Endothelial cell of umbilical vein (primary cell): ENCODE measurements at regions of chr2 and their contacts with region 1.

Region 1: GRCh38 chr2:36663851-36664695 is 32.4 kb upstream of the VIT start:
- DNase-seq: peak; percentile 82
- H3K4me3 ChIP-seq: no peak overlapping the region
- H3K27ac ChIP-seq: peak overlapping the region; percentile 15
- H3K4me1 ChIP-seq: peaks cover 14% of the 10 kb centered on the region
- H3K27me3 ChIP-seq: no peaks in the 10 kb centered on the region
- CTCF ChIP-seq: peak; percentile 53 to 67
- POLR2A ChIP-seq: no peak

Region 2: DNA sequence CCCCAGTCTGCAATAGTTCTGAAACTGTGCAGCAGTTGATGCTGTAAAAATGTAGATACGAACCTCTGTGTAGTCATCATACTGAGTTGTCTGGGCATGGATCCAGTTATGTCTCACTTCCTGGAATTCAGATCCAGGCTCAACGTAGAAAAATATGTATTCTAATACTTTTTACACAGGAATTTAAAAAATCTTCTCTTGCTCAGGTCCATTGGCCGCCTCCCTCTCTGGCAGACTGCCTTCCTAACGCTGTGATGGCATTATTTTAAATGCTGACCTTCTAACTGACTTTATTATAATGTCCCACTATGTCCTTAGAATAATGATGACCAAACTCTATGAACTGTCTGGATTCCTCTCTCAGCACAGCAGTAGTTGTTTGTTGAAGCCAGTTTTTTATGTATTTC is 185.7 kb before region 1 on chr2:
- CTCF ChIA-PET with region 1: no interaction called
- POLR2A ChIA-PET with region 1: no interaction called
- dilution Hi-C with region 1: no loop called
- intact Hi-C with region 1: no loop called
- DNase-seq: peak; percentile 96
- H3K4me3 ChIP-seq: no peak overlapping the region
- H3K27ac ChIP-seq: peak overlapping the region; percentile 82
- H3K4me1 ChIP-seq: peaks cover 73% of the 10 kb centered on the region
- H3K27me3 ChIP-seq: no peaks in the 10 kb centered on the region
- CTCF ChIP-seq: no peak
- POLR2A ChIP-seq: no peak

Region 3: GRCh38 chr2:36507408-36507812 is 156.7 kb before region 1 on chr2:
- CTCF ChIA-PET with region 1: interaction called, 6 read pairs
- POLR2A ChIA-PET with region 1: no interaction called
- dilution Hi-C with region 1: loop called (anchors 25 kb)
- intact Hi-C with region 1: no loop called
- DNase-seq: peak; percentile 64
- H3K4me3 ChIP-seq: no peak overlapping the region
- H3K27ac ChIP-seq: no peak overlapping the region
- H3K4me1 ChIP-seq: no peaks in the 10 kb centered on the region
- H3K27me3 ChIP-seq: no peaks in the 10 kb centered on the region
- CTCF ChIP-seq: peak; percentile 68 to 75
- POLR2A ChIP-seq: no peak

Region 4: GRCh38 chr2:36536776-36537175 is 127.3 kb before region 1 on chr2:
- CTCF ChIA-PET with region 1: interaction called, 31 read pairs
- POLR2A ChIA-PET with region 1: no interaction called
- dilution Hi-C with region 1: no loop called
- intact Hi-C with region 1: no loop called
- DNase-seq: no peak
- H3K4me3 ChIP-seq: no peak overlapping the region
- H3K27ac ChIP-seq: no peak overlapping the region
- H3K4me1 ChIP-seq: peaks cover 44% of the 10 kb centered on the region
- H3K27me3 ChIP-seq: no peaks in the 10 kb centered on the region
- CTCF ChIP-seq: no peak
- POLR2A ChIP-seq: no peak

Region 5: DNA sequence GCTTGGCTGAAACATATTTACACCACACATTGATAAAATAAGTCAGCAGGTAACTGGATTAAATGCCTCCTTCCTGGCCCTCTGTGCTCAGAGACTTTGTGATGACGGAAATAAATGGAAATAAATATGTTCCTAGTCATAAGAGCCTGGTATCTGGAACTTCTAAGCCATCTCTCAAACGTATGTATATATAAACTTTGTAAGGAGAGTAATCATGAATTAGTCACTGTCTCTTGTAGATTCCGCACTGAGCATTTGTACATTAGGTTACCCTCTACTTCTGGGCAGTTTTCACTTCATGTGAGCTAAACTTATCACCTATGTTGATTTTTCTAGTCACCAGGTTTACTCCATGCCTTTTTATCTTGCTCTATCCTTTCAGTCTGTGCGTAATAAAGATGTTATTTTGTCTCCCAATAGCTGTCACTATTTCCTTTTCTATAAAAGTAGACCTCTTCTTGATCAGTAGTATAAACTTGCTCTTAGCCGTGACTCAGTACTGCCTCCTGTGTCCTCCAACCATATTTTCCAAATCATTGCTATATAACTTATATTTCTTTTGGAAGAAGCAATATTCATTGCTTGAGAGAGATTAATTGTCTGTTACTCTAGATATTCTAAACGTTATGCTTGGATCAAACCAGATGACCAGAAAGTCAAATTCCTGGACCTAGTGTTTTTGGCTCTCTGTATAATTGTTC is 119.3 kb before region 1 on chr2:
- CTCF ChIA-PET with region 1: interaction called, 42 read pairs
- POLR2A ChIA-PET with region 1: interaction called, 4 read pairs
- dilution Hi-C with region 1: no loop called
- intact Hi-C with region 1: loop called (anchors 2 kb)
- DNase-seq: no peak
- H3K4me3 ChIP-seq: no peak overlapping the region
- H3K27ac ChIP-seq: peak overlapping the region; percentile 5
- H3K4me1 ChIP-seq: peaks cover 91% of the 10 kb centered on the region
- H3K27me3 ChIP-seq: no peaks in the 10 kb centered on the region
- CTCF ChIP-seq: peak in 1 of 2 donors; percentile 19
- POLR2A ChIP-seq: peak; percentile 62

Region 6: GRCh38 chr2:36568516-36569246 is 95.4 kb before region 1 on chr2:
- CTCF ChIA-PET with region 1: interaction called, 29 read pairs
- POLR2A ChIA-PET with region 1: interaction called, 4 read pairs
- dilution Hi-C with region 1: no loop called
- intact Hi-C with region 1: loop called (anchors 2 kb)
- DNase-seq: peak; percentile 95
- H3K4me3 ChIP-seq: peak overlapping the region in 1 of 3 experiments; percentile 42
- H3K27ac ChIP-seq: peak overlapping the region; percentile 98
- H3K4me1 ChIP-seq: peaks cover 91% of the 10 kb centered on the region
- H3K27me3 ChIP-seq: no peaks in the 10 kb centered on the region
- CTCF ChIP-seq: no peak
- POLR2A ChIP-seq: peak; percentile 61

Region 7: DNA sequence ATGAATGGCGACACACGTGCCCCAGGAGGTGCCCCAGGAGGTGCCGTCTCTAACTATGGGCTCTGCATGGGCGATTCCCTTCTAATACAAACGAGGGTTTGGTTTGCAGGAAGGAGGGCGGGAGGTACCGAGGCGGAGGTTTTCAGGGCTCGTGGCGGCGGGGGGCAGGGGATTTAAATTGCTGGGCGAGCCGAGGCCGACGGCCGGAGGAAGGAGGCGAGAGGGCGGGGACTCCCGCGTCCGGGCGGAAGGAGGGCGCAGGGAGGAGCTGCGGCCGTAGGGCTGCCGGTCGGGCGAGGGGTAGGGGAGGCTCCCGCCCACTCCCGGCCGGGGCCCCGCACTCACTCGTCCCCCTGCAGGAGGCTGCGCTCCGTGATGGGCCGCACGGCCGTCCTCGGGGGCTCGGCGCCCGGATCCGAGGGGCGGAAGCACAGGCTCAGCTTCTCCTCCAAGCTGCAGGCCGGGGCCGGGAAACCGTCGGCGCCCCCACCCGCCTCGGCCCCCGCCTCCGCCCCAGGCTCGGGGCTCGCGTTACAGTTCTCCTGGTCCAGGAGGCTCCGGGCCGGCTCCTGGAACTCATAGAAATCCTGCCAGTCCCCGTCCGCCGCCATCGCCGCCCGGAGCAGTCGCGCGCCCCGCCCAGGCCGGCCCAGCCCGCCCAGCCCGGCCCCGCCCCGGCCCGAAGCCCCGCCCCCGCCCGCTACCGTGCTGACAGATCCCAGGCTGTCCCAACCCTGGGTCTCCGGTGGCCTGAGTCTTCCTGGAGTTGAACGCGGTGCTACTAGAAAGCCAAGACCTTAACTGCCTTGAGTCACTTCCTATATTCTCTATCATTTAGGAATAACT is 66.3 kb before region 1 on chr2 and contains the start of gene FEZ2:
- CTCF ChIA-PET with region 1: interaction called, 4 read pairs
- POLR2A ChIA-PET with region 1: no interaction called
- dilution Hi-C with region 1: no loop called
- intact Hi-C with region 1: loop called (anchors 2 kb)
- DNase-seq: peak; percentile 73
- H3K4me3 ChIP-seq: peak within 1 kb of the TSS; percentile 86 to 98 (median 97)
- H3K27ac ChIP-seq: peak within 1 kb of the TSS; percentile 65
- H3K4me1 ChIP-seq: peaks cover 22% of the 10 kb centered on the region
- H3K27me3 ChIP-seq: no peaks in the 10 kb centered on the region
- CTCF ChIP-seq: no peak
- POLR2A ChIP-seq: peak; percentile 74
- total RNA-seq, gene FEZ2: 72.4 and 73.5 TPM in 2 replicates

Region 8: DNA sequence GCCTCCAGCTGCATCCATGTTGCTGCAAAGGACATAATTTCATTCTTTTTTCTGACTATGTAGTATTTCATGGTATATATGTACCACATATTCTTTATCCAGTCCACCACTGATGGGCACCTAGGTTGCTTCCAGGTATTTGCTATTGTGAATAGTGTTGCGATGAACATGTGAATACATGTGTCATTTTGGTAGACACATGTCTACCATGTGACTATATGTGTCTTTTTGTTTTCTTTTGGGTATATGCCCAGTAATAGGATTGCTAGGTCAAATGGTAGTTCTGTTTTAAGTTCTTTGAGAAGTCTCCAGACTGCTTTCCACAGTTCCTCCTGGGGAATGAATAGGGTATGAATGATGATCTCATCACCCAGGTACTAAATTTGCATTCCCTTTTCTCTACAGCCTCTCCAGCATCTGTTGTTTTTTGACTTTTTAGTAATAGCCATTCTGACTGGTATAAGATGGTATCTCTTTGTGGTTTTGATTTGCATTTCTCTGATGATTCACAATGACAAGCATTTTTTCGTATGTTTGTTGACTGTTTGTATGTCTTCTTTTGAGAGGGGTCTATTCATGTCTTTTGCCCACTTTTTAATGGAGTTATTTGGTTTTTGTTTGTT is 30.5 kb before region 1 on chr2:
- CTCF ChIA-PET with region 1: no interaction called
- POLR2A ChIA-PET with region 1: no interaction called
- dilution Hi-C with region 1: no loop called
- intact Hi-C with region 1: no loop called
- DNase-seq: no peak
- H3K4me3 ChIP-seq: no peak overlapping the region
- H3K27ac ChIP-seq: no peak overlapping the region
- H3K4me1 ChIP-seq: no peaks in the 10 kb centered on the region
- H3K27me3 ChIP-seq: no peaks in the 10 kb centered on the region
- CTCF ChIP-seq: no peak
- POLR2A ChIP-seq: no peak

Region 9: GRCh38 chr2:36753706-36754221 is 89.7 kb after region 1 on chr2:
- CTCF ChIA-PET with region 1: no interaction called
- POLR2A ChIA-PET with region 1: no interaction called
- dilution Hi-C with region 1: no loop called
- intact Hi-C with region 1: no loop called
- DNase-seq: peak; percentile 43
- H3K4me3 ChIP-seq: no peak overlapping the region
- H3K27ac ChIP-seq: no peak overlapping the region
- H3K4me1 ChIP-seq: peaks cover 6% of the 10 kb centered on the region
- H3K27me3 ChIP-seq: peaks cover under 1 to 2% of the 10 kb centered on the region in 2 experiments
- CTCF ChIP-seq: no peak
- POLR2A ChIP-seq: no peak